Dendritic cell treated with granulocyte-macrophage colony-stimulating factor and Interleukin-4, amounts not matched to agents 40 ng/mL and 50 ng/mL, for 4 days (primary cell): ENCODE measurements at regions of chr7 and their contacts with region 1.

Region 1: GRCh38 chr7:1059200-1060091 is 15.1 kb downstream of the GPR146 start:
- H3K4me3 Mint-ChIP-seq: no peak overlapping the region
- H3K27ac Mint-ChIP-seq: peak overlapping the region; percentile 76
- H3K4me1 Mint-ChIP-seq: peaks cover 65% of the 10 kb centered on the region
- H3K27me3 Mint-ChIP-seq: peaks cover 89% of the 10 kb centered on the region

Region 2: DNA sequence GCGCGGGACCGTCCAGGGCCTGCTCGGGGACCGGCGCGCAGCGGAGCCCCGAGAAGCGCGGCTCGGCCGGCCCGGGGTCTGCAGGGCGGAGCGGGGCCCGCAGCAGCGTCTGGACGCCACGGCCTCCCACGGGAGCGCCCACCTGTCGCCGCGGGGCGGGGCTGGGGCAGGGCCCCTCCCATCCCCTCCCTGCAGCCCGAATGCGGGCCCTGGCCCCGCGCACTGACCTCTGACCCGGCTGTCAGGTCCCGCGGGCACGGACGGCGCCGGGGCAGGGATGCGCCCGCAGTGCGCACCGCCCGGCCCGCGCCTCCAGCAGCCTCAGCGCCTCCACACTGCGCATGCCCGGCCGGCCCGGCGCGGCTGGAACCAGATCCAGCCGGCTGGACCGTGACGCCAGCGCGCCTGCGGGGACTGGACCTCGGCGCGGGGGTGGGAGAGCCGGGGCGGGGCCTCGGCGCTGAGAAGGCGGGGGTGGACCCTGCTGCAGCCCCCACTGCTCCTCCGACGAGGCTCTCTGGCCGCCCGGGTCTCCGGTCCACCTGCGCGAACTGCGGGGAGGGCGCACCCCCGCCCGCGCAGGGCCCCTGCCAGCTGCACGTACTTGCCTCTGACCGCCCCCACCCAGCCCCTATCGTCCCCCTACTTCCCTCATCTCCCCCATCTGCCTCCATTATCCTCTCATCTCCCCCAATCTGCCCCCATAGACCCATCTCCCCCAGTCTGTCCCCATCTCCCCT is 31.2 kb before region 1 on chr7:
- intact Hi-C with region 1: loop called (anchors 5 kb)
- H3K4me3 Mint-ChIP-seq: peak overlapping the region; percentile 92
- H3K27ac Mint-ChIP-seq: peak overlapping the region; percentile 90
- H3K4me1 Mint-ChIP-seq: peaks cover 72% of the 10 kb centered on the region
- H3K27me3 Mint-ChIP-seq: peaks cover 3% of the 10 kb centered on the region